Natural killer cell (primary cell): ENCODE measurements at regions of chr7 and their contacts with region 1.

Region 1: GRCh38 chr7:36670585-36671431 is 53.5 kb downstream of the AOAH start:
- DNase-seq: peak; percentile 56 to 92
- ATAC-seq: peak; percentile 79 to 88 (median 87)
- H3K4me3 ChIP-seq: no peak overlapping the region
- H3K4me3 Mint-ChIP-seq: peak overlapping the region; percentile 74
- H3K27ac ChIP-seq: no peak overlapping the region
- H3K27ac Mint-ChIP-seq: peak overlapping the region; percentile 94 to 99
- H3K4me1 ChIP-seq: peaks cover 39% of the 10 kb centered on the region
- H3K4me1 Mint-ChIP-seq: peaks cover 68 to 76% of the 10 kb centered on the region in 2 donors
- H3K27me3 ChIP-seq: no peaks in the 10 kb centered on the region
- H3K27me3 Mint-ChIP-seq: no peaks in the 10 kb centered on the region
- CTCF ChIP-seq: peak; percentile 87

Region 2: GRCh38 chr7:36487756-36488336 is 183.0 kb before region 1 on chr7:
- intact Hi-C with region 1: loop called (anchors 5 kb)
- DNase-seq: peak in 1 of 2 donors; percentile 83
- ATAC-seq: peak; percentile 80 to 87 (median 84)
- H3K4me3 ChIP-seq: no peak overlapping the region
- H3K4me3 Mint-ChIP-seq: no peak overlapping the region
- H3K27ac ChIP-seq: no peak overlapping the region
- H3K27ac Mint-ChIP-seq: no peak overlapping the region
- H3K4me1 ChIP-seq: no peaks in the 10 kb centered on the region
- H3K4me1 Mint-ChIP-seq: peaks cover 0 to 5% of the 10 kb centered on the region in 2 donors
- H3K27me3 ChIP-seq: no peaks in the 10 kb centered on the region
- H3K27me3 Mint-ChIP-seq: no peaks in the 10 kb centered on the region
- CTCF ChIP-seq: peak; percentile 79

Region 3: GRCh38 chr7:36514289-36515243 is 156.2 kb before region 1 on chr7:
- intact Hi-C with region 1: loop called (anchors 10 kb)
- DNase-seq: no peak
- ATAC-seq: peak in 2 of 3 donors; percentile 24 to 27
- H3K4me3 ChIP-seq: no peak overlapping the region
- H3K4me3 Mint-ChIP-seq: peak overlapping the region; percentile 64
- H3K27ac ChIP-seq: peak overlapping the region; percentile 70
- H3K27ac Mint-ChIP-seq: peak overlapping the region; percentile 92
- H3K4me1 ChIP-seq: peaks cover 38% of the 10 kb centered on the region
- H3K4me1 Mint-ChIP-seq: peaks cover 49 to 73% of the 10 kb centered on the region in 2 donors
- H3K27me3 ChIP-seq: no peaks in the 10 kb centered on the region
- H3K27me3 Mint-ChIP-seq: no peaks in the 10 kb centered on the region
- CTCF ChIP-seq: no peak

Region 4: GRCh38 chr7:36625247-36625646 is 45.6 kb before region 1 on chr7:
- intact Hi-C with region 1: loop called (anchors 1 kb)
- DNase-seq: no peak
- ATAC-seq: no peak
- H3K4me3 ChIP-seq: no peak overlapping the region
- H3K4me3 Mint-ChIP-seq: no peak overlapping the region
- H3K27ac ChIP-seq: peak overlapping the region; percentile 10
- H3K27ac Mint-ChIP-seq: peak overlapping the region; percentile 77 to 79
- H3K4me1 ChIP-seq: peaks cover 16% of the 10 kb centered on the region
- H3K4me1 Mint-ChIP-seq: peaks cover 69 to 70% of the 10 kb centered on the region in 2 donors
- H3K27me3 ChIP-seq: no peaks in the 10 kb centered on the region
- H3K27me3 Mint-ChIP-seq: no peaks in the 10 kb centered on the region
- CTCF ChIP-seq: no peak

Region 5: GRCh38 chr7:36746347-36746746 is 75.5 kb after region 1 on chr7:
- intact Hi-C with region 1: no loop called
- DNase-seq: no peak
- ATAC-seq: no peak
- H3K4me3 ChIP-seq: no peak overlapping the region
- H3K4me3 Mint-ChIP-seq: no peak overlapping the region
- H3K27ac ChIP-seq: no peak overlapping the region
- H3K27ac Mint-ChIP-seq: no peak overlapping the region
- H3K4me1 ChIP-seq: peaks cover 20% of the 10 kb centered on the region
- H3K4me1 Mint-ChIP-seq: peaks cover 34 to 56% of the 10 kb centered on the region in 2 donors
- H3K27me3 ChIP-seq: no peaks in the 10 kb centered on the region
- H3K27me3 Mint-ChIP-seq: no peaks in the 10 kb centered on the region
- CTCF ChIP-seq: no peak